ENCODE measurements at regions of chr7 and their contacts with region 1.

Region 1: DNA sequence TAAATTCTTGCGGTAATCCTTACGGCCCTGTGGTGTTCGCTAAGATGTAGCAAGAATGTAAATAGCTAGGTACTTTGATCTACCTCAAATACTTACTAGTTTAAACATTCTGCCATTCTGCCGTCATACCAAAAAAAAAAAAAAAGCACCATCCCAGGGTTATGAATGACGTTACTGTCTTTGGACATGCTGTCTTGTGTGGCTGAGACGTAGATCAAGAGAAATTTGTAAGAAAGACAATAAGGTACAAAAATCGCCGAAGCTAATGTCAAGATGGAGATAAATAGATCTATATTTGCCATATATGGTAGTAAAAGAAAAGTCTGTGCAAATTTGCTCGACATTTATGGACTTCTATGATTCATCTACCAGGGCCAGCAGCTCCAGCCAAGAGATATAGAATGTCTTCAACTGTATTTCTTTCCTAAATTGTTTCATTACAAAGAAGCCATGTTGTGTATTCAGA is 195.6 kb downstream of the CUX1 start:
- DNase-seq: peak; percentile 84
- ATAC-seq: peak; percentile 72
- H3K4me3 ChIP-seq: peak overlapping the region; percentile 37; the same call in 1 of the 2 replicates
- H3K27ac ChIP-seq: peak overlapping the region; percentile 94; the same call in 1 of the 2 replicates
- H3K4me1 ChIP-seq: peaks cover 26% of the 10 kb centered on the region
- H3K27me3 ChIP-seq: no peaks in the 10 kb centered on the region
- CTCF ChIP-seq: no peak
- POLR2A ChIP-seq: no peak
- RAD21 ChIP-seq: no peak

Region 2: GRCh38 chr7:102044984-102045673 is 32.1 kb after region 1 on chr7:
- CTCF ChIA-PET with region 1: no interaction called
- POLR2A ChIA-PET with region 1: no interaction called
- dilution Hi-C with region 1: no loop called
- in situ Hi-C with region 1: no loop called
- intact Hi-C with region 1: loop called (anchors 2 kb)
- DNase-seq: peak; percentile 93
- ATAC-seq: peak; percentile 90
- H3K4me3 ChIP-seq: no peak overlapping the region
- H3K27ac ChIP-seq: peak overlapping the region; percentile 41
- H3K4me1 ChIP-seq: peaks cover 18% of the 10 kb centered on the region
- H3K27me3 ChIP-seq: no peaks in the 10 kb centered on the region
- CTCF ChIP-seq: no peak
- POLR2A ChIP-seq: no peak
- RAD21 ChIP-seq: no peak

Region 3: GRCh38 chr7:102055181-102055976 is 42.4 kb after region 1 on chr7:
- CTCF ChIA-PET with region 1: no interaction called
- POLR2A ChIA-PET with region 1: no interaction called
- dilution Hi-C with region 1: no loop called
- in situ Hi-C with region 1: no loop called
- intact Hi-C with region 1: no loop called
- DNase-seq: no peak
- ATAC-seq: no peak
- H3K4me3 ChIP-seq: no peak overlapping the region
- H3K27ac ChIP-seq: no peak overlapping the region
- H3K4me1 ChIP-seq: no peaks in the 10 kb centered on the region
- H3K27me3 ChIP-seq: no peaks in the 10 kb centered on the region
- CTCF ChIP-seq: no peak
- POLR2A ChIP-seq: no peak
- RAD21 ChIP-seq: no peak